PC-9 (cell line): ENCODE measurements at regions of chr11 and their contacts with region 1.

Region 1: GRCh38 chr11:126345759-126346585 is 9.5 kb upstream of the ST3GAL4 start:
- DNase-seq: peak; percentile 62 to 96
- H3K4me3 ChIP-seq: peak overlapping the region; percentile 27; the same call in 1 of the 2 replicates
- H3K27ac ChIP-seq: peak overlapping the region; percentile 90
- H3K4me1 ChIP-seq: peaks cover 97% of the 10 kb centered on the region
- H3K27me3 ChIP-seq: no peaks in the 10 kb centered on the region
- CTCF ChIP-seq: no peak

Region 2: DNA sequence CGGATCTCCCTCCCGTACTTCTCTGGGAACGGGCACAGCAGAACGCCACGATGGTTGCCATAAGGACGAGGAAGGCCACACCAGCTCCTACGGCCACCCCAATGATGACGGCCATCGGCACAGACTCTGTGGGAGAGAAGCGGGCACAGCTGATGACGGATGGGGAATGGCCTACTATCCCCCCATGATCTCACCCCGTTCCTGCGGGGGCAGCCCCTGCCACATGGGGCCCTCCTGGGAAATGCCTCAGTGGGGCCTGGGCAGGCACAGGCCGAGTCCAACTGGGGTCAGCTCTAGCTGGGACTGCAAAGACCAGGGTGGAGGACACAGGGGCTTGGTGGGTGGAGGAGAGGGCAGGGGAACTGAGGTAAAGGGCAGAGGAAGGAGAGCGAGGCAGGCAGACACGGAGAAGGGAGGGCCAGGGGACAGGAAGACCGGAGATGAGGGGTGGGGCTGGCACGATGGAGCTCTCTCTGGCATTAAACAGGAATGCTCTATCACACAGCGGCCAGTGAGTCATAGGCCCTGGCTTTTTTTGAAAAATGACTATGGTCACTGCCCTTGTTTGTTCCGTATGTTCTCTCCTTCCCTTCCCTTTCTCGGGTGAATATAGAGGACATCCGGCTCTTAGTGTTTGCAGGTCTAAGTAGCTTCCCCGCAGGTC is 85.6 kb after region 1 on chr11:
- CTCF ChIA-PET with region 1: no interaction called
- POLR2A ChIA-PET with region 1: no interaction called
- intact Hi-C with region 1: loop called (anchors 10 kb)
- DNase-seq: peak; percentile 68 to 84
- H3K4me3 ChIP-seq: no peak overlapping the region
- H3K27ac ChIP-seq: peak overlapping the region; percentile 68
- H3K4me1 ChIP-seq: peaks cover 25% of the 10 kb centered on the region
- H3K27me3 ChIP-seq: no peaks in the 10 kb centered on the region
- CTCF ChIP-seq: no peak

Region 3: DNA sequence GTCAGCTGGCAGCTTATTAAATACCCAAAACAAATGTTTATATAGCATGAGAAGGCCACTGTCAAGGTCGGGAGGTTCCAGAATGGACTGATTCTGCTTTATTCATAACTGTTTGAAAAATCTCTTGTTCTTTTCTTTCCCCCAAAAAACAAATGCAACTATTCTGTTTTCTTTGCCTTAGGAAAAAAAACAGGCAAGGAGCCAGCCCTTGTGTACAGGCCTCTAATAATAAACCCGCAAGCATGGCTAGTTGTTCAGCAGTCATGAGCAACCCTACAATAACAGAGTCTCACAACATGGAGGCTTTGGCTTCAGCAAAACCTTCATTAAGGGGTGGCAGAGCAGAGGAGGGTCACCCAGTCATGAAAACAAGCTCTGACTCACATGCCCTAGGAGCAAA is 462.9 kb after region 1 on chr11:
- CTCF ChIA-PET with region 1: no interaction called
- POLR2A ChIA-PET with region 1: no interaction called
- intact Hi-C with region 1: no loop called
- DNase-seq: no peak
- H3K4me3 ChIP-seq: no peak overlapping the region
- H3K27ac ChIP-seq: no peak overlapping the region
- H3K4me1 ChIP-seq: no peaks in the 10 kb centered on the region
- H3K27me3 ChIP-seq: peaks cover 49% of the 10 kb centered on the region
- CTCF ChIP-seq: no peak